ENCODE measurements at regions of chr11 and their contacts with region 1.

Region 1: GRCh38 chr11:65619281-65619928 is 3.8 kb downstream of the PCNX3 start:
- DNase-seq: peak in 1 of 5 donors; percentile 31
- H3K4me3 ChIP-seq: no peak overlapping the region
- H3K27ac ChIP-seq: no peak overlapping the region
- H3K4me1 ChIP-seq: peaks cover 3% of the 10 kb centered on the region
- H3K27me3 ChIP-seq: no peaks in the 10 kb centered on the region
- CTCF ChIP-seq: no peak
- EP300 ChIP-seq: no peak
- POLR2A ChIP-seq: no peak

Region 2: GRCh38 chr11:65225279-65226102 is 393.9 kb before region 1 on chr11:
- intact Hi-C with region 1: no loop called
- DNase-seq: peak; percentile 53 to 72 (median 64)
- H3K4me3 ChIP-seq: peak overlapping the region; percentile 45
- H3K27ac ChIP-seq: peak overlapping the region in 1 of 2 donors; percentile 44
- H3K4me1 ChIP-seq: peaks cover 4% of the 10 kb centered on the region
- H3K27me3 ChIP-seq: no peaks in the 10 kb centered on the region
- CTCF ChIP-seq: peak in 2 of 3 donors; percentile 39 to 41
- EP300 ChIP-seq: no peak
- POLR2A ChIP-seq: no peak

Region 3: GRCh38 chr11:65652511-65653231 is 33.3 kb after region 1 on chr11:
- intact Hi-C with region 1: no loop called
- DNase-seq: peak; percentile 95 to 98 (median 97)
- H3K4me3 ChIP-seq: peak overlapping the region; percentile 63
- H3K27ac ChIP-seq: peak overlapping the region; percentile 74 to 98
- H3K4me1 ChIP-seq: peaks cover 18% of the 10 kb centered on the region
- H3K27me3 ChIP-seq: no peaks in the 10 kb centered on the region
- CTCF ChIP-seq: peak in 2 of 3 donors; percentile 9 to 22
- EP300 ChIP-seq: no peak
- POLR2A ChIP-seq: peak; percentile 70

Region 4: DNA sequence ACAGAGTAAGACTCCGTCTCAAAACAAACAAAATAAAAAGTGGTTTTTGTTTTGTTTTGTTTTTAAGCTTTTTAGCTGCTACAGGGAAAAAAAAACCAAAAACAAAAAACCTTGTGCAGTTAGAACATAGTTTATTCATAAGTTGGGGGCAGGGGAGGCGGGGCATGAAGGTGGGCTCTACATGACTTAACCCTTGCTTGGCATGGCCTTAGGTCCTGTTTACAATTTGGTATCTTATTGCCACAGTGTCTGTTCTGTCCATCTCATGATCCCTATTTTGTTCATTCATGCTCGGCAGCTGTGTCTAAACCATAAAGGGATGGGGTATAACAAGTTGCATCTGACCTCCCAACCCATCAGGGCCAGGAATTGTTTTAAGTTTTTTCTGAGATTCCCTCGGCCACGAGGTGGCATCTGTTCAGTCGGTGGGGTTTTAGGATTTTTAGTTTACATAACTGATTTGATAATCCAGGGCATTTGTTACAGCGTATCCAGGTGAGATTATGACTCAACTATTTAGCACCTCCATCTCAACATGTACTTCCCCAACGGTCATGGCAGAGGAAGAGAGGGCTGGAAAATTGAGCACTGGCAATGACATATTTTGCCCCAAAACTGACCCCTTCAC is 154.5 kb after region 1 on chr11:
- intact Hi-C with region 1: loop called in 1 of 4 experiments (anchors 2 kb)
- DNase-seq: no peak
- H3K4me3 ChIP-seq: no peak overlapping the region
- H3K27ac ChIP-seq: no peak overlapping the region
- H3K4me1 ChIP-seq: no peaks in the 10 kb centered on the region
- H3K27me3 ChIP-seq: no peaks in the 10 kb centered on the region
- CTCF ChIP-seq: no peak
- EP300 ChIP-seq: no peak
- POLR2A ChIP-seq: no peak

Measured in ovary (tissue), 10 donors.